B cell (primary cell): ENCODE measurements at regions of chr15 and their contacts with region 1.

Region 1: DNA sequence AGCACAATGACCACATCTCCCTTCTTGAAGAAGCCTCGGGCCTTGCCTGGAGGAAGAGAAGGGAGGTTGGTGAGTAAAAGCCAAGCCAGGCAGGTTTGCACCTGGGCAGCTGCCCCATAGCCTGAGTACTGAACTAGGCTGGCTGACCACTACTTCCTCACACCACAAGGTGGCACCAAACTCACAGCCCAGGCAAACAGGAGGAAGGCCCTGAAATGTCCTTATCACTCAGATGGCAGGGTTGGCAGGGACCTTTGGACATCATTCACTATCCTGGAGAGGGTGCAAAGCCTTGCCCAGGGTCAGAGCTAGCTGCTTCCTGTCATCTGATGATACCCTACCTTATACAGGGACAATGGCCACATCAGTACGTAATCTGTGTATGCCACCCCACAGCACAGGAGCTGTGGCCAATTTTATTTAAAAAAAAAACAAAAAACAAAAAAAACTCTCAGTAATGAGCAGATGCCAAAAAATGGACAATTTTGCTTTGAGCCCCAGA is 2.2 kb upstream of the GRAMD2A start:
- DNase-seq: peak; percentile 82
- ATAC-seq: peak; percentile 79
- H3K4me3 ChIP-seq: no peak overlapping the region
- H3K4me3 Mint-ChIP-seq: no peak overlapping the region
- H3K27ac ChIP-seq: no peak overlapping the region
- H3K27ac Mint-ChIP-seq: no peak overlapping the region
- H3K4me1 ChIP-seq: peaks cover 6 to 10% of the 10 kb centered on the region in 2 donors
- H3K4me1 Mint-ChIP-seq: peaks cover 29% of the 10 kb centered on the region
- H3K27me3 ChIP-seq: peaks cover 0 to 26% (median 5%) of the 10 kb centered on the region in 4 experiments
- H3K27me3 Mint-ChIP-seq: peaks cover 16% of the 10 kb centered on the region
- CTCF ChIP-seq: peak; percentile 89

Region 2: DNA sequence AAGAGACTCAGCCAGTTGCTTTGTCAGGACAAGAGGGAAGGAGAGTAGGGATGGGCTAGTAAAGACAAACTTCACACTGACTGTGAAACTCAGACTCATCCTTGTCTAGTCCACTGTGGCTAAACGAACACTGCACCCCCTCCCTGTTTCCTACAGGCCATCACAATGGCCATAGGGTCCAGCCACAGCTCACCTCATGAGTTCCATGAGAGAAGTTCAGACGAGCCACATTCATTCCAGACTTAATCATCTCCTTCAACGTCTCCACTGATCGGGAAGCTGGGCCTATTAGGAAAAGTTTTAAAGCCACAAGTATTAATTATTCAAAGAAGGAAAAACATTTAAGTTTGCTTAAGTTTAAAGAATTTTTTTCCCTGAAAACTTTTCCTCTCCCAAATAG is 17.5 kb after region 1 on chr15:
- CTCF ChIA-PET with region 1: interaction called, 24 read pairs
- POLR2A ChIA-PET with region 1: no interaction called
- intact Hi-C with region 1: no loop called
- DNase-seq: no peak
- ATAC-seq: no peak
- H3K4me3 ChIP-seq: no peak overlapping the region
- H3K4me3 Mint-ChIP-seq: no peak overlapping the region
- H3K27ac ChIP-seq: no peak overlapping the region
- H3K27ac Mint-ChIP-seq: no peak overlapping the region
- H3K4me1 ChIP-seq: peaks cover 0 to 5% of the 10 kb centered on the region in 2 donors
- H3K4me1 Mint-ChIP-seq: peaks cover 16% of the 10 kb centered on the region
- H3K27me3 ChIP-seq: no peaks in the 10 kb centered on the region
- H3K27me3 Mint-ChIP-seq: no peaks in the 10 kb centered on the region
- CTCF ChIP-seq: no peak

Region 3: DNA sequence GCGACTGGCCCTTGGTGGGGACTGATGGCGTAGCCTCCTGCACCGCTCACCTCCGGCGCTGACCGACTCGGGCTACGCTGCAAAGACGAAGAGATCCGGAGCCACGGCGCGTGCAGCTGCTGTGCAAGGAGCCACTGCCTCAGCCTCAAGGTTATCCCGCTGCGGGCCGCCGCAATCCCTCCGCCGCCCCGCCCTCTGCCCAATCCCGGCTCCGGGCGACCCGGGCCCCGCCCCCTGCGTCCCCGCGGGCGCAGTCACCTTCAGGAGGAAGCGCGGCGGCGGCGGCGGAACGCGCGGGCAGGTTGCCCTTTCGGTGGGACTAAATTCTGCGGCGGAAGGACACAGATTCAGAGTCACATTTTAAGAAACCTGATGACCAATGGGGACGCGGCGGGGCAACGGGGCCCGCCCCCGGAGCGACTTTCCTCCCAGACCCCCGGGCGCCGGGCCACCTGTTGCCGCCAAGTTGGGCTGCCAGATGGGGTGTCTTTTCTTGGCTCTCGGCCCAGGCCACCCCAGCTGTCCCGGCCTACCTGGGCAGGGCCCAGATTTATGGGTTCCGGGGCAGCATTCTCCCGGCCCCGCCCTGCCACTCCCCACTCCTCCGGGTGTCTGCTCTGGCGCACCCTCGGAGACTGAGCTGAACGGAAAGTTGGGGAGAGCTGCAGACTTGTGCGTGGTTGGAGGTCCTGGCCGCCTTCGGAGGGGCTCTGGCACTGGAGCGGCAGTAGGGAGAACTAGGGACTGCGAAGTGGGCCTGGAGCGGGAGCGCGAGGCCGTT is 31.5 kb after region 1 on chr15 and contains the start of gene PKM:
- CTCF ChIA-PET with region 1: interaction called, 87 read pairs
- POLR2A ChIA-PET with region 1: no interaction called
- intact Hi-C with region 1: loop called (anchors 1 kb)
- DNase-seq: peak; percentile 96
- ATAC-seq: peak; percentile 52
- H3K4me3 ChIP-seq: peak within 1 kb of the TSS; percentile 77 to 96 (median 93)
- H3K4me3 Mint-ChIP-seq: peak within 1 kb of the TSS; percentile 94
- H3K27ac ChIP-seq: peak within 1 kb of the TSS; percentile 91 to 94
- H3K27ac Mint-ChIP-seq: peak within 1 kb of the TSS; percentile 97
- H3K4me1 ChIP-seq: peaks cover 37 to 44% of the 10 kb centered on the region in 2 donors
- H3K4me1 Mint-ChIP-seq: peaks cover 38% of the 10 kb centered on the region
- H3K27me3 ChIP-seq: no peaks in the 10 kb centered on the region
- H3K27me3 Mint-ChIP-seq: no peaks in the 10 kb centered on the region
- CTCF ChIP-seq: no peak
- total RNA-seq, gene PKM: 306 and 323 TPM in 2 replicates

Region 4: DNA sequence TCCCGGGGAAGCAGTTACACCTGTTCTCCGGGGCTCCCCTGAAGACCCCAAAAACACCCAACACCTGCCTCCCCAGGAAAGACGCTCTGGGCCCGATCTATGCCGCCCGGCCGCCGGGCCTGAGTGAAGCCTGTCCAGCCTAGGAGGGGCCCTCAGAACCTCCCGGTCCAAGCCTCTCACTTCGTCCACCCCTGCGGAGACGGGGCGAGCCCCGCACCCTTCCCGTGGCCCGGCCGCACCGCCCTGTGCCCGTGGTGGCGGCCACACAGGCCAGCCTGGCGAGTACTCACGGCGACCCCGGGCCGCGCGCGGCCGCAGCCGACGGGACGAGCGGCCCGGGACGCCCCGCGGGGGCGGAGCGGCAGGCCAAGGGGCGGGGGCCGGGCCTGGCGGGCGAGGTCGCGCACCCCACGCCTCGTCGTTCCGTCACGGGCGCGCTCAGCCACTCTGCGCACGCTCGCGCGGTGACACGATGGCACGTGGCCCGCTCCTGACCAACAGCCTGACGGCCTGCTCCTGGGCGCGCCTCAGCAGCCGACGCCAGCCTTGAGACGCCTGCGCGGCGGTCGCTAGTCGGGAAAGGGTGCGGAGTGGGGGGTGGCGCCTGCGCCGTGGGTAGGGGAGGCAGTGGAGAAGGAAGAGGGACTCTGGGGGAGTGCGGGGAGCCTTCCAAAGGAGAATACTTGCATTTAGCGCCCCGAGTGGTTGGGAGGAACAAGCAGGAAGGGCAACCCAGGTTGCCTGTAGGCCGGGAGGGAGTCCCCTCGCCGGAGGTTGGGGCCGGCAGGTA is 72.6 kb after region 1 on chr15 and contains the start of gene PARP6:
- CTCF ChIA-PET with region 1: interaction called, 15 read pairs
- POLR2A ChIA-PET with region 1: no interaction called
- intact Hi-C with region 1: loop called (anchors 1 kb)
- DNase-seq: peak; percentile 98
- ATAC-seq: peak; percentile 94
- H3K4me3 ChIP-seq: peak within 1 kb of the TSS; percentile 53 to 88 (median 82)
- H3K4me3 Mint-ChIP-seq: peak within 1 kb of the TSS; percentile 89
- H3K27ac ChIP-seq: peak within 1 kb of the TSS; percentile 71 to 80
- H3K27ac Mint-ChIP-seq: peak within 1 kb of the TSS; percentile 96
- H3K4me1 ChIP-seq: peaks cover 16 to 23% of the 10 kb centered on the region in 2 donors
- H3K4me1 Mint-ChIP-seq: peaks cover 38% of the 10 kb centered on the region
- H3K27me3 ChIP-seq: no peaks in the 10 kb centered on the region
- H3K27me3 Mint-ChIP-seq: no peaks in the 10 kb centered on the region
- CTCF ChIP-seq: peak; percentile 57
- total RNA-seq, gene PARP6: 118 and 130 TPM in 2 replicates

Region 5: DNA sequence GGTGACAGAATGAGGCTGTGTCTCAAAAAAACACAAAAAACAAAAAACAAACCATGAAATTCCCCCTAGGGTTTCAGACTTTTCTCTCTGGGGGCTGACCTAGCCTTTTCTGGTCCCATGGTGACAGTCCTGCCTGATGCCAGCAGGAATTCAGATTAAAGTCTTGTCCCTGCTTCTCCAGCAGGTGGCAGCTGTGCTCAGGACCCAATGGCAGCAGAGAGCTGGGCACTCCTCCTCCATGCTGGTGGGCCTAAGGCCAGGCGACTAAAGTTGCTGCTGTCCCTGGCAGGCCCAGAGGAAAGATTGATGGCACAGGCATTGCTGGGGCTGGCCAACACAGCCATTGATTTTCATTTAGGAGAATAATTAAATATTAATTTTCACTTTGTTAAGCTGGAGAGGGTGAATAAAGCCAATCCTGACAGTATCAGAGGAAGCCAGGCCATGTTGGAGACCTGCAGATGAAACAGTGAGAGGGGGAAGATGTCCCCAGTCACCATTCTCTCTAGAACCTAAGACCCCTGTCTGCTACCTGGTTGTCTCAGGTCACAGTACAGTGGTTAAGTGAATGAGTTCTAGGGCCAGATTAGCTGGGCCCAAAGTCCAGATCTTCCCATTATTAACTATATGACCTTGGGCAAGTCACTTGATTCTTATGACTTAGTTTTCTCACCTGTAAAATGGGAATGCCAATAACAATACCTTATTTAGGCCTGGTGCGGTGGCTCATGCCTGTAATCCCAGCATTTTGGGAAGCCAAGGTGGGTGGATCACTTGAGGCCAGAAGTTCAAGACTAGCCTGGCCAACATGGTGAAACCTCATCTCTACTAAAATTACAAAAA is 113.1 kb after region 1 on chr15:
- CTCF ChIA-PET with region 1: interaction called, 12 read pairs
- POLR2A ChIA-PET with region 1: no interaction called
- intact Hi-C with region 1: no loop called
- DNase-seq: peak; percentile 72
- ATAC-seq: peak; percentile 87
- H3K4me3 ChIP-seq: no peak overlapping the region
- H3K4me3 Mint-ChIP-seq: no peak overlapping the region
- H3K27ac ChIP-seq: no peak overlapping the region
- H3K27ac Mint-ChIP-seq: no peak overlapping the region
- H3K4me1 ChIP-seq: no peaks in the 10 kb centered on the region
- H3K4me1 Mint-ChIP-seq: no peaks in the 10 kb centered on the region
- H3K27me3 ChIP-seq: no peaks in the 10 kb centered on the region
- H3K27me3 Mint-ChIP-seq: no peaks in the 10 kb centered on the region
- CTCF ChIP-seq: peak; percentile 79

Region 6: GRCh38 chr15:72532991-72533601 is 333.3 kb after region 1 on chr15:
- CTCF ChIA-PET with region 1: interaction called, 7 read pairs
- POLR2A ChIA-PET with region 1: no interaction called
- intact Hi-C with region 1: loop called (anchors 5 kb)
- DNase-seq: peak; percentile 55
- ATAC-seq: no peak
- H3K4me3 ChIP-seq: no peak overlapping the region
- H3K4me3 Mint-ChIP-seq: no peak overlapping the region
- H3K27ac ChIP-seq: no peak overlapping the region
- H3K27ac Mint-ChIP-seq: no peak overlapping the region
- H3K4me1 ChIP-seq: no peaks in the 10 kb centered on the region
- H3K4me1 Mint-ChIP-seq: peaks cover 11% of the 10 kb centered on the region
- H3K27me3 ChIP-seq: no peaks in the 10 kb centered on the region
- H3K27me3 Mint-ChIP-seq: no peaks in the 10 kb centered on the region
- CTCF ChIP-seq: peak; percentile 65